Activated CD8-positive, alpha-beta memory T cell treated with anti-CD3 and anti-CD28 coated beads, Interleukin-2, amount 10 ng/mL, durations not matched to agents 7 days and 5 days (primary cell): ENCODE measurements at regions of chr2 and their contacts with region 1.

Region 1: GRCh38 chr2:240143801-240144648 is 3.6 kb upstream of the OTOS start:
- DNase-seq: peak; percentile 80
- ATAC-seq: peak; percentile 87
- H3K4me3 Mint-ChIP-seq: no peak overlapping the region
- H3K27ac Mint-ChIP-seq: no peak overlapping the region
- H3K4me1 Mint-ChIP-seq: no peaks in the 10 kb centered on the region
- H3K27me3 Mint-ChIP-seq: peaks cover 5% of the 10 kb centered on the region

Region 2: DNA sequence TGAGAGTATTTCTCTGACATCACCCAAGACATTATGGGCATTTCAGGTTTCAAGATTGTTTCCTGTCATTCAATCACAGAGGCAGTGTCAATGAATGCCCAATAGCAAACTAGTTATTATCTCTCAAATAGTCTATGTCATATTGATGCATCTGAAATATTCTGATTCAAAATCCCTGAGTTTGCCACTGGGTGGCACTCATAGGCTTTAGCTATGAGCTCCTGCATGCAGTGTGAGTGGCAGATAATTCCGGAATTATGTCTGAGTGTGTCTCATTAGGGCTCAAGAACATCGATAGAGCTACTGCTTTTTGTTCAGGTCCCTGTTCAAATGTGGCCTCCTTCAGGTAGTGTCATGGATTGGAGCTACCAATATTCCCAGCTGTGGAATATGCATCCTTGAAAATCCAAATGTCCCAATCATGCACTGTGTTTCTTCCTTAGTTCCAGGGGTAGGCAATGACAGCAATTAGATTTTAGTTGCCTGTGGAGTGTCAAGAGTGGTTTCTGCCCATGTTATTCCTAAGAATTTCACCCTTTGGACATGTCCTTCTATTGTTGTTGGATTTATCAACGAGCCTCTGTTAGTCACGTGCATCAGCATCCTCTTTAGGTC is 82.9 kb before region 1 on chr2:
- CTCF ChIA-PET with region 1: interaction called, 90 read pairs
- DNase-seq: peak; percentile 52
- ATAC-seq: peak; percentile 60
- H3K4me3 Mint-ChIP-seq: no peak overlapping the region
- H3K27ac Mint-ChIP-seq: no peak overlapping the region
- H3K4me1 Mint-ChIP-seq: no peaks in the 10 kb centered on the region
- H3K27me3 Mint-ChIP-seq: peaks cover 32% of the 10 kb centered on the region

Region 3: GRCh38 chr2:240579771-240580614 is 436.0 kb after region 1 on chr2:
- CTCF ChIA-PET with region 1: no interaction called
- DNase-seq: peak; percentile 90
- ATAC-seq: peak; percentile 88
- H3K4me3 Mint-ChIP-seq: no peak overlapping the region
- H3K27ac Mint-ChIP-seq: peak overlapping the region; percentile 80
- H3K4me1 Mint-ChIP-seq: peaks cover 46% of the 10 kb centered on the region
- H3K27me3 Mint-ChIP-seq: no peaks in the 10 kb centered on the region